ENCODE measurements at regions of chr13 and their contacts with region 1.

Region 1: DNA sequence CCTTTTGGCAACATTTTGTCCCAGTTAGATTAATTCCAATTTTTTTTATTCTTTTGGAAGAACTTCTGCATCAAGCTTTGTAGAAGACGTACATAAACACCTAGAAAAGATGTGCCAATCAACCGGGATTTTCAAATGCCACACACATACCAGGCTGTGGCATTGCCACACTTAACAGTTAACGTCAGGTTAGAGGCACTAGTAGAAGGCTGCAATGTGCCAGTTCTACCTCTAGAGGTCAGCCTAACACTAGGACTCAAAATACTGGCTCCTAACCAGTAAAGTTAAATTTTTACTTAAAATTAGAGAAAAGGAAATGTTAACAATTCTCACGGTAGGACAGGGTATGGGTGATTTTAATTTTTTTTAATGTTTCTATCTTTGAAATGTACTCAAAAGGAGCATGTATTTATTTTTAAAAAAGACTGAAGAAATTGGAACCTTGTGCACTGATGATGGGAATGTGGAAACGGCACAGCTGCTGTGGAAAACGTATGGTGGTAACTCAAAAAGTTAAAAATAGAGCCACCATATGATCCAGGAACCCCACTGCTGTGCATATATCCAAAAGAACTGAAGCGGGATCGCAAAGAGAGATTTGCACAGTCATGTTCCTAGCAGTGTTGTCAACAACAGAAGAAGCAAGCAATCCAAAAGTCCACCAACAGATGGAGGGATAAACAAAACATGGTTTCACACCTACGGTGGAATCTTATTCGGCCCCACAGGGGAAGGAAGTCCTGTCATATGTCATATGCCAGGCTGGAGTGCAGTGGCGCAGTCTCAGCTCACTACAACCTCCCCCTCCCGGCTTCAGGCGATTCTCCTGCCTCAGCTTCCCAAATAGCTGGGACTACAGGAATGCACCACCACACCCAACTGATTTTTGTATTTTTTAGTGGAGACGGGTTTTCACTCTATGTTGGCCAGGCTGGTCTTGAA is 30.3 kb downstream of the CRYL1 start:
- DNase-seq: peak; percentile 65
- ATAC-seq: peak; percentile 67
- H3K4me3 Mint-ChIP-seq: no peak overlapping the region
- H3K27ac Mint-ChIP-seq: no peak overlapping the region
- H3K4me1 Mint-ChIP-seq: no peaks in the 10 kb centered on the region
- H3K27me3 Mint-ChIP-seq: no peaks in the 10 kb centered on the region

Region 2: DNA sequence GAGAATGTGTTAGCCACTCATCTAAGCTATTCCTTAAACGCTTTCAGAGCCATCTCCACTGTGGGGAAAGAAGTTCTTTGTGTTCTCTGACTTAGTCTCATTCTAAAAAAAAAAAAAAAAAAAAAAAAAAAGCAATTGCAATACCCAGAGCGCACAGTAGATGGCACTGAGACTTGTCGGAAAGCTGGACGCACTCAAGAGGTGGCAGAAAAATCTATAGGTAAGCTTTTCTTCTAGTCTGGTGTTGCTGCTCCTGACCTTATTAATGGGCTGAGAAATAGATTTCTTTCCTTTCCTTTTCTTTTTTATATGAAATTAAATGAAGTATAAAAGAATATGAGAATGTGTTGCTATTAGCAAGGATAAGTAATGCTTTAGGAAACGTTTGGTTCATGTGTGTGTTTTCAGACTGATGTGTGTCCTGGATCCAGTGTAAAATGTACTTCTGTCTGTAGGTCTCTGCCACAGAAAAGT is 298.0 kb before region 1 on chr13:
- CTCF ChIA-PET with region 1: interaction called, 87 read pairs
- POLR2A ChIA-PET with region 1: no interaction called
- intact Hi-C with region 1: no loop called
- DNase-seq: peak; percentile 41
- ATAC-seq: peak; percentile 41
- H3K4me3 Mint-ChIP-seq: no peak overlapping the region
- H3K27ac Mint-ChIP-seq: no peak overlapping the region
- H3K4me1 Mint-ChIP-seq: peaks cover 21% of the 10 kb centered on the region
- H3K27me3 Mint-ChIP-seq: peaks cover 28% of the 10 kb centered on the region

Region 3: DNA sequence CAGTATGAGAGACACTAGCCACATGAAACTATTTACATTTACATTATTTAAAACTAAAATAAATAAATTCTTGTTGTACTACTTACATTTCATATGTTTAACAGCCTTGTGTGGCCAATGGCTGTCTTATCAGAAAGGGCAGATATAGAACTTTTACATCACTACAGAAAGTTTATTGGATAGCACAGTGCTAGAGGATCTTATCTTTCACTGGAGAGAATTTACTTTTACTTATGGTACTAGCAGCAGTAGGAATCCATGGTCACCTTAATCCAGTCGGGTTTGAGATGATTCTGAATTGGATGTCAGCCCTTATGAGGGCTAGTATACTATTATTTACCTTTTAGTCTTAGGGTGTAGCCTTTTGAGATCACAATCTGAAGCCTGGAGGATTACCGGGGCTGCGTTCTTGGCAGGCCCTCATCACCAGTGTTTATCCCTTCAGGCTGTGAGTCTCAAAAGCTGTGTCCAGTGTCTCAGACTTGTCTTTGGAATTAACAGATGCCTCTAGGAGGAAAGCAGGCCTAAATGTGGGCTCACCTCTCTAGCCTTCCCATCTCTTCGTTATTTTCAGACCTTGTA is 93.3 kb after region 1 on chr13:
- CTCF ChIA-PET with region 1: no interaction called
- POLR2A ChIA-PET with region 1: no interaction called
- intact Hi-C with region 1: loop called in 1 of 2 experiments (anchors 5 kb)
- DNase-seq: no peak
- ATAC-seq: no peak
- H3K4me3 Mint-ChIP-seq: no peak overlapping the region
- H3K27ac Mint-ChIP-seq: no peak overlapping the region
- H3K4me1 Mint-ChIP-seq: no peaks in the 10 kb centered on the region
- H3K27me3 Mint-ChIP-seq: no peaks in the 10 kb centered on the region

Region 4: GRCh38 chr13:20713751-20714150 is 218.4 kb after region 1 on chr13:
- CTCF ChIA-PET with region 1: interaction called, 4 read pairs
- POLR2A ChIA-PET with region 1: no interaction called
- intact Hi-C with region 1: loop called in 1 of 2 experiments (anchors 2 kb)
- DNase-seq: peak; percentile 30
- ATAC-seq: no peak
- H3K4me3 Mint-ChIP-seq: no peak overlapping the region
- H3K27ac Mint-ChIP-seq: no peak overlapping the region
- H3K4me1 Mint-ChIP-seq: peaks cover 12% of the 10 kb centered on the region
- H3K27me3 Mint-ChIP-seq: peaks cover 11% of the 10 kb centered on the region

Region 5: DNA sequence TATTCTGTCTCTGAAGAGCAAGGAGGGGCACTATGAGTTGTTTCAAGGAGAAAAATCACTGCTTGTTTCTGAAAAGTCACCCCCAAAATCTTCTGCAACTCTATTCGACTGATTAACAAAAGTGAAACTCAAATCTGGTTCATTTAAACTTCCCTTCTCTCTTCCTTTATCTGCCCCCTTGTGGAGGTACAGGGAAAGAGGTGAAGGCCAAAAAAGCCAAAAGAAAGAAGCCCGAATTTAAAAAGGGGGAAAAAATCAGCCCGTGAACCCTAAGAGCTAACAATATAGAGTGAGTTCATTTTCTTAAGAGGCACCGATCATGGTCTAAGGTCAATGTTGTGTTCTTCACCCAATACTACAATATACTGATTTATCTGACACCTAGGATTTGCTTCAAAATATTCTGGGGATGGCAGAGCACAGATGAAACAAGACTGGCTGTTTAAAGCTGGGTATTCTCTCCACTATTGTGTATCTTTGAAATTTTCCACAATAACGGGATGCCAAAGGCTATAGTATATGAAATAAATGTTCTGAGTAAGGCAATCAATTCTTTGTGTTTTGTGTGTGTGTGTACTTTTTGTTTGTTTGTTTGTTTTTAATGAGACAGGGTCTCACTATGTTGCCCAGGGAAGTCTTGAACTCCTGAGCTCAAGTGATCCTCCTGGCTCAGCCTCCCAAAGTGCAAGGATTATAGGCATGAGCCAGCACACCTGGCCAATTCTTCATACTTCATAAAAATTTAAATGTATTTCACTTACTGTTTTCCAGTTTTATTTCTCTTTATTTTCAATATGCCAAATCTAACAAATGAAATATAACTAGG is 333.4 kb after region 1 on chr13:
- CTCF ChIA-PET with region 1: interaction called, 19 read pairs
- POLR2A ChIA-PET with region 1: no interaction called
- intact Hi-C with region 1: loop called (anchors 1 kb)
- DNase-seq: peak; percentile 36
- ATAC-seq: peak; percentile 72
- H3K4me3 Mint-ChIP-seq: no peak overlapping the region
- H3K27ac Mint-ChIP-seq: no peak overlapping the region
- H3K4me1 Mint-ChIP-seq: peaks cover 6% of the 10 kb centered on the region
- H3K27me3 Mint-ChIP-seq: no peaks in the 10 kb centered on the region

Region 6: DNA sequence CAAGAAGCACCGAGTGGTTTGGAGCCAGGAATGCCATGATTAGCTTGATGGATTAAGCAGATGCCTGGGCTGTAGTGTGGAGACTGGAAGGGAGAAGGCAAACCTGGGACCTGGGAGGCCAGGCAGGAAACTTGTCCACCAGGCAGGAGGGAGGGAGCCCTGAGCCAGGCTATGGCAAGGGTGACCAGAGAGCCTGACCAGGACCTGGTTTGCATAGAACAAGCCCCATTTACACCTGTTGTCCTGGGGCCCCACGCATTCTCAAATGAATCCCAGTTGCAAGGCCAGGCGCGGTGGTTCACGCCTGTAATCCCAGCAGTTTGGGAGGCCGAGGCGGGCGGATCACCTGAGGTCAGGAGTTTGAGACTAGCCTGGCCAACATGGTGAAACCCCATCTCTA is 616.2 kb after region 1 on chr13:
- CTCF ChIA-PET with region 1: no interaction called
- POLR2A ChIA-PET with region 1: no interaction called
- intact Hi-C with region 1: loop called in 1 of 2 experiments (anchors 2 kb)
- DNase-seq: no peak
- ATAC-seq: no peak
- H3K4me3 Mint-ChIP-seq: no peak overlapping the region
- H3K27ac Mint-ChIP-seq: no peak overlapping the region
- H3K4me1 Mint-ChIP-seq: peaks cover 3% of the 10 kb centered on the region
- H3K27me3 Mint-ChIP-seq: no peaks in the 10 kb centered on the region

Region 7: GRCh38 chr13:21638319-21639282 is 1143.2 kb after region 1 on chr13:
- CTCF ChIA-PET with region 1: no interaction called
- POLR2A ChIA-PET with region 1: no interaction called
- intact Hi-C with region 1: no loop called
- DNase-seq: peak; percentile 39
- ATAC-seq: no peak
- H3K4me3 Mint-ChIP-seq: no peak overlapping the region
- H3K27ac Mint-ChIP-seq: no peak overlapping the region
- H3K4me1 Mint-ChIP-seq: no peaks in the 10 kb centered on the region
- H3K27me3 Mint-ChIP-seq: peaks cover 2% of the 10 kb centered on the region